ENCODE measurements at regions of chr19 and their contacts with region 1.

Region 1: DNA sequence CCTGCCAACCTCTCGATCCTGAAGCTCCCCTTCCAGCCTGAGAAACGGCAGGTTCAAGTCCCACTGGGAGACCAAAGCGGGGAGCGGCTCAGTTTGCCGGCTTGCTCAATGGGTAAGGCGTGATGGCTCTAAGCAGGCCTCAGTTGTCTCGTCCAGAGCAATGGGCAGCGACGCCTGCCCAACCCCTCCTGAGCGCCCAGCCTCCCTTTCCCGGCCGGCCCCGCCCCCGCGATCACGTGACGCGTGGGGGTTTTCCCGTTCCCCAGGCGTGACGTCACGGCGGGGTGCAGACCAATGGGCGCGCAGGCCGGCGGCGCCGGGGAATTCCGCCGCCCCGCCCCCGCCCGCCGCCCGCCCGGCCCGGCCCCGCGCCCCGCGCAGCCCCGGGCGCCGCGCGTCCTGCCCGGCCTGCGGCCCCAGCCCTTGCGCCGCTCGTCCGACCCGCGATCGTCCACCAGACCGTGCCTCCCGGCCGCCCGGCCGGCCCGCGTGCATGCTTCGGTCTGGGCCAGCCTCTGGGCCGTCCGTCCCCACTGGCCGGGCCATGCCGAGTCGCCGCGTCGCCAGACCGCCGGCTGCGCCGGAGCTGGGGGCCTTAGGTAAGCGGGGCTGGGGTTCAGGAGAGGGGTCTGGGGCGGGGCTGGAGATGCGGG is at the start of gene RELB:
- DNase-seq: peak; percentile 97
- ATAC-seq: peak; percentile 53
- H3K4me3 Mint-ChIP-seq: peak within 1 kb of the TSS; percentile 94
- H3K27ac Mint-ChIP-seq: peak within 1 kb of the TSS; percentile 97
- H3K4me1 Mint-ChIP-seq: peaks cover 16% of the 10 kb centered on the region
- H3K27me3 Mint-ChIP-seq: no peaks in the 10 kb centered on the region
- total RNA-seq, gene RELB: 43.8 to 51.2 TPM

Region 2: DNA sequence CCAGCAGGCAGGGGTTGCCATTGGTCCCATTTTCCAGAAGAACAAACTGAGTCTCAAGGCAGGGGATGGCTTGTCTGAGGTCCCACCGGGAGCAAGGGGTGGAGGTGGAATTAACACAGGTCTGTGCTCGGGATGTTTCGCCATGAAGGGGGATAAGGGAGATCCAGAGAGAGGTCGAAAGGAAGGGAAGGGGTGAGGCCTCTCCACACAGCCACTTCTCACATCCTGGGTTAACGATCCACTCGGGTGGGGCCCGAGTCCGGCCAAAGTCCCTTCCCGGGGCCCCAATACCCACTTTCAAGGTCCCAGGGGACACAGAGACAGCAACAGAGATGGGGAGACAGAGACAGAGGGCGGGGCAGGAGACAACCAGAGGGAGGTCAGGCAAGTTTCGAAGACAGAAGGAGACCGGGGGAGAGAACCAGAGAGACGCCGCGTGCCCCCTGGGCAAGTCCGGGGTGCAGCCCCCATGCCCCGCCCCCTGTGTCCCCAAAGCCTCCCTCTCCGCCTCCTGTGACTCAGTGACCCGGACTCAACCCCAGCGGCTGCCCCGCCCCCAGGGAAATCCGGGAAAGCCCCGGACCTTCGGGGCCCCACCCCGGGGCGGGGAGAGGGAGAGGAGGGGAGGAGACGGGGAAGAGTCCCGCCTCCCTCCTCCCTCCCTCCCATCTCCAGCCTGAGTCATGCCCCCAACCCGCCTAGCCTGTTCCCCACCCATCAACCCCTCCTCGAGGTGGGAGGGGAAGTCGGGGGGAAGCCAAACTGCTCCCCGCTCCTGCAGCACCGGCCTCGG is 254.1 kb before region 1 on chr19:
- CTCF ChIA-PET with region 1: no interaction called
- POLR2A ChIA-PET with region 1: no interaction called
- intact Hi-C with region 1: loop called in 1 of 2 experiments (anchors 1 kb)
- DNase-seq: peak; percentile 98
- ATAC-seq: peak; percentile 85
- H3K4me3 Mint-ChIP-seq: peak overlapping the region; percentile 91
- H3K27ac Mint-ChIP-seq: peak overlapping the region; percentile 95
- H3K4me1 Mint-ChIP-seq: peaks cover 43% of the 10 kb centered on the region
- H3K27me3 Mint-ChIP-seq: no peaks in the 10 kb centered on the region

Region 3: DNA sequence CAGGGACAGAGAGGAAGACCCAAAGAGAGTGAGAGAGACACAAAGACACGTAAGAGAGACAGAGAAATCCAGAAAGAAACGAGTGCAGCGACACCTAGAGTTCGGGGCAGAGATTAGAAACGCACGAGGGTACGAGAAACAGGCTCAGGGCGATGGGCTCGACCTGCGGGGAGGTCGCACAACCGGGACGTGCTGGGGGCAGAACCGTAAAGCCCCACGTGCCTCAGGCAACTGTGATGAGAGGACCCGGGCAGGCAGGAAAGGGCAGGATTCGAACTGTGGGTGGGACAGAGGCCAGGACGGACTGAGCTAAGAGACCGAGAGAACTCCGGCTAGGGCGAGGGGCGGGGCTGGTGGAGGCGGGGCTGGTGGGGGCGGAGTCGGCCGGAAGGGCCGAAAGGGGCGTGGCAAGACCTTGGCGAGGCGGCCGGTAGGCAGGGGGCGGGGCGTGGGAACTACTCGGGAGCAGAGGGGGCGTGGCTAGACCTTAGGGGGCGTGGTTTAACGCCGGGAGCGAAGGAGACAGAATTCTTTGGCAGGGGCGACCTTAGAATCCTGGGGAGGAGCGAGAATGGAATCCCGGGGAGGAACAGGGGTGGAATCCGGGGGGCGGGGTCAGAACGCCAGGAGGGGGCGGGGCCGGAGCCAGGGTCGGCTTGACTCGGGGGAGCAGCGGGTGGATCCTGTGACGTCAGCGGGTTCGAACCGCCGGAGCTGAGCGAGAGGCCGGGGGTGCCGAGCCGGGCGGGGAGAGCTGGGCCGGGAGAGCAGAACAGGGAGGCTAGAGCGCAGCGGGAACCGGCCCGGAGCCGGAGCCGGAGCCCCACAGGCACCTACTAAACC is 155.4 kb before region 1 on chr19 and contains the start of gene NECTIN2:
- CTCF ChIA-PET with region 1: no interaction called
- POLR2A ChIA-PET with region 1: no interaction called
- intact Hi-C with region 1: loop called in 1 of 2 experiments (anchors 1 kb)
- DNase-seq: peak; percentile 98
- ATAC-seq: peak; percentile 77
- H3K4me3 Mint-ChIP-seq: peak within 1 kb of the TSS; percentile 73
- H3K27ac Mint-ChIP-seq: peak within 1 kb of the TSS; percentile 10
- H3K4me1 Mint-ChIP-seq: peaks cover 21% of the 10 kb centered on the region
- H3K27me3 Mint-ChIP-seq: peaks cover 21% of the 10 kb centered on the region
- total RNA-seq, gene NECTIN2: 0.80 to 0.93 TPM

Region 4: GRCh38 chr19:45038931-45039893 is 38.0 kb after region 1 on chr19 and contains the start of gene CLASRP:
- CTCF ChIA-PET with region 1: interaction called, 4 read pairs
- POLR2A ChIA-PET with region 1: interaction called, 8 read pairs
- intact Hi-C with region 1: loop called (anchors 1 kb)
- DNase-seq: peak; percentile 94
- ATAC-seq: peak; percentile 96
- H3K4me3 Mint-ChIP-seq: peak within 1 kb of the TSS; percentile 97
- H3K27ac Mint-ChIP-seq: peak within 1 kb of the TSS; percentile 96
- H3K4me1 Mint-ChIP-seq: peaks cover 32% of the 10 kb centered on the region
- H3K27me3 Mint-ChIP-seq: no peaks in the 10 kb centered on the region
- total RNA-seq, gene CLASRP: 101 to 103 TPM

Region 5: GRCh38 chr19:45097776-45098520 is 96.7 kb after region 1 on chr19:
- CTCF ChIA-PET with region 1: no interaction called
- POLR2A ChIA-PET with region 1: no interaction called
- intact Hi-C with region 1: no loop called
- DNase-seq: no peak
- ATAC-seq: no peak
- H3K4me3 Mint-ChIP-seq: no peak overlapping the region
- H3K27ac Mint-ChIP-seq: peak overlapping the region; percentile 20
- H3K4me1 Mint-ChIP-seq: peaks cover 68% of the 10 kb centered on the region
- H3K27me3 Mint-ChIP-seq: no peaks in the 10 kb centered on the region

Region 6: GRCh38 chr19:45250832-45251451 is 249.7 kb after region 1 on chr19 and contains the start of gene MARK4:
- CTCF ChIA-PET with region 1: no interaction called
- POLR2A ChIA-PET with region 1: no interaction called
- intact Hi-C with region 1: loop called in 1 of 2 experiments (anchors 1 kb)
- DNase-seq: peak; percentile 72
- ATAC-seq: peak; percentile 67
- H3K4me3 Mint-ChIP-seq: peak within 1 kb of the TSS; percentile 77
- H3K27ac Mint-ChIP-seq: peak within 1 kb of the TSS; percentile 76
- H3K4me1 Mint-ChIP-seq: peaks cover 29% of the 10 kb centered on the region
- H3K27me3 Mint-ChIP-seq: peaks cover 2% of the 10 kb centered on the region
- total RNA-seq, gene MARK4: 19.1 to 19.6 TPM

Region 7: GRCh38 chr19:45469132-45469944 is 468.1 kb after region 1 on chr19:
- CTCF ChIA-PET with region 1: no interaction called
- POLR2A ChIA-PET with region 1: no interaction called
- intact Hi-C with region 1: loop called in 1 of 2 experiments (anchors 5 kb)
- DNase-seq: peak; percentile 97
- ATAC-seq: peak; percentile 82
- H3K4me3 Mint-ChIP-seq: peak overlapping the region; percentile 78
- H3K27ac Mint-ChIP-seq: peak overlapping the region; percentile 86
- H3K4me1 Mint-ChIP-seq: peaks cover 29% of the 10 kb centered on the region
- H3K27me3 Mint-ChIP-seq: peaks cover 11% of the 10 kb centered on the region